ENCODE measurements at regions of chr4 and their contacts with region 1.

Region 1: DNA sequence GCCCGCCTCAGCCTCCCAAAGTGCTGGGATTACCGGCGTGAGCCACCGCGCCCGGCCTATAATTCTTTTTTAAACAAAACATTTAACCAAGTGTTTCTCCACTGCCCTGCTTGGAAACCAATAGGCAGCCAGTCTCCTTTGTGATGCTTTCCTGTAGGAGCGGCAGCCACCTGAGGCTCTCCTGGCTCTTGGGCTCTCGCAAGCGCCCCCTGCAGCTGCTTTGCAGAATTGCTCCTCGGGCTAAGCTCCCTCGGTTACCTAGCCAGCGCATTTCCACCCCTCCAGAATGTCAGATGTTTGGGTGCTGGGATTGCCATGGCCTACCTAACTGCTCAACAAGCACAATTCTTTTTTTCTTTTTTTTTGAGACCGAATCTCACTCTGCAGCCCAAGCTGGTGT is 7.7 kb downstream of the S100P start:
- DNase-seq: peak; percentile 73 to 95
- H3K4me3 ChIP-seq: no peak overlapping the region
- H3K27ac ChIP-seq: no peak overlapping the region
- H3K4me1 ChIP-seq: no peaks in the 10 kb centered on the region; a peak in 1 of 7 replicates
- H3K27me3 ChIP-seq: no peaks in the 10 kb centered on the region
- CTCF ChIP-seq: peak; percentile 82 to 94 (median 85)
- EP300 ChIP-seq: no peak
- POLR2A ChIP-seq: no peak
- RAD21 ChIP-seq: peak; percentile 62 to 72

Region 2: GRCh38 chr4:6316461-6317003 is 384.8 kb before region 1 on chr4:
- CTCF ChIA-PET with region 1: no interaction called
- POLR2A ChIA-PET with region 1: no interaction called
- DNase-seq: no peak
- H3K4me3 ChIP-seq: no peak overlapping the region
- H3K27ac ChIP-seq: no peak overlapping the region
- H3K4me1 ChIP-seq: no peaks in the 10 kb centered on the region
- H3K27me3 ChIP-seq: no peaks in the 10 kb centered on the region
- CTCF ChIP-seq: no peak
- EP300 ChIP-seq: no peak
- POLR2A ChIP-seq: no peak
- RAD21 ChIP-seq: no peak

Region 3: GRCh38 chr4:6688879-6689505 is 12.4 kb before region 1 on chr4:
- CTCF ChIA-PET with region 1: interaction called, 59 read pairs
- POLR2A ChIA-PET with region 1: interaction called, 5 read pairs
- DNase-seq: peak in 1 of 2 experiments; percentile 55
- H3K4me3 ChIP-seq: no peak overlapping the region
- H3K27ac ChIP-seq: 0 out of 2 replicates have a peak overlapping the region, but pooled peaks have one; percentile 10
- H3K4me1 ChIP-seq: peaks cover 0 to 20% (median 16%) of the 10 kb centered on the region in 4 experiments; a peak in 6 of 7 replicates
- H3K27me3 ChIP-seq: 0 out of 7 replicates have a peak, but pooled peaks cover 0 to 2% (median 0%) of the 10 kb centered on the region in 4 experiments
- CTCF ChIP-seq: no peak
- EP300 ChIP-seq: no peak
- POLR2A ChIP-seq: no peak
- RAD21 ChIP-seq: no peak

Region 4: DNA sequence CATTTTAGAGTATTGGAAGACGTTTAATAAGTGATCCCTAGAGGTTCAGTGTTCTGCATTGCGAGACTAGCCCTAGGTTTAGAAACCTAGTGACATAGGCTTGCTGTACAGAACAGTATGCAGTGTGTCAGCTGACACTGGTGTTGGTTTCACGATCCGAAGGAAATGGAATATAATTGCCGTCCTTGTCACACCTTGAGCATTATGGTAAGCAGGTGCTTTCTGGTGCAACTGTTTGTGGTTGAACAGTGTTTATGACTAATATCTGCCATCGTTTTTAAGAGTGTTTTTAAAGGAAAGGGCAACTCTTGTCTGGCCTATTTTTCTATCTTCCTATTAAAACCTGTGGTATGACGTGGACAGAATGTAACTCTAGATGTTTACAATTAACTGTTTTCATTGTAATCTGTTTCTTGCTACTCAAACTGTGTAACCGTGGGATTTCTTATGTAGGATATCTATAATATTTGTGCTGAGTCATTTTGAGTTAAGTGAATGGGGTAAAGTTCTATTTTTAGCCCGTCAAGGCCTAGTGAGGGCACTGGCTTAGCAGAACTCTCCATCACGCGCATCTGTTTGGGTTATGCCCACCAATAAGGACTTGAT is 154.4 kb after region 1 on chr4:
- CTCF ChIA-PET with region 1: no interaction called
- POLR2A ChIA-PET with region 1: no interaction called
- DNase-seq: no peak
- H3K4me3 ChIP-seq: no peak overlapping the region
- H3K27ac ChIP-seq: no peak overlapping the region
- H3K4me1 ChIP-seq: peaks cover 0 to 3% (median 1%) of the 10 kb centered on the region in 4 experiments; a peak in 2 of 7 replicates
- H3K27me3 ChIP-seq: no peaks in the 10 kb centered on the region
- CTCF ChIP-seq: no peak
- EP300 ChIP-seq: no peak
- POLR2A ChIP-seq: no peak
- RAD21 ChIP-seq: no peak

Measured in H1 (cell line).